Adrenal gland (tissue), 19 donors: ENCODE measurements at regions of chr4 and their contacts with region 1.

Region 1: GRCh38 chr4:16026160-16026761 is 57.6 kb downstream of the PROM1 start:
- DNase-seq: peak in 4 of 7 donors; percentile 17 to 45 (median 36)
- H3K4me3 ChIP-seq: no peak overlapping the region
- H3K27ac ChIP-seq: no peak overlapping the region
- H3K4me1 ChIP-seq: peaks cover 0 to 6% of the 10 kb centered on the region in 2 donors
- H3K27me3 ChIP-seq: no peaks in the 10 kb centered on the region
- CTCF ChIP-seq: peak; percentile 72 to 91 (median 84)
- POLR2A ChIP-seq: no peak

Region 2: DNA sequence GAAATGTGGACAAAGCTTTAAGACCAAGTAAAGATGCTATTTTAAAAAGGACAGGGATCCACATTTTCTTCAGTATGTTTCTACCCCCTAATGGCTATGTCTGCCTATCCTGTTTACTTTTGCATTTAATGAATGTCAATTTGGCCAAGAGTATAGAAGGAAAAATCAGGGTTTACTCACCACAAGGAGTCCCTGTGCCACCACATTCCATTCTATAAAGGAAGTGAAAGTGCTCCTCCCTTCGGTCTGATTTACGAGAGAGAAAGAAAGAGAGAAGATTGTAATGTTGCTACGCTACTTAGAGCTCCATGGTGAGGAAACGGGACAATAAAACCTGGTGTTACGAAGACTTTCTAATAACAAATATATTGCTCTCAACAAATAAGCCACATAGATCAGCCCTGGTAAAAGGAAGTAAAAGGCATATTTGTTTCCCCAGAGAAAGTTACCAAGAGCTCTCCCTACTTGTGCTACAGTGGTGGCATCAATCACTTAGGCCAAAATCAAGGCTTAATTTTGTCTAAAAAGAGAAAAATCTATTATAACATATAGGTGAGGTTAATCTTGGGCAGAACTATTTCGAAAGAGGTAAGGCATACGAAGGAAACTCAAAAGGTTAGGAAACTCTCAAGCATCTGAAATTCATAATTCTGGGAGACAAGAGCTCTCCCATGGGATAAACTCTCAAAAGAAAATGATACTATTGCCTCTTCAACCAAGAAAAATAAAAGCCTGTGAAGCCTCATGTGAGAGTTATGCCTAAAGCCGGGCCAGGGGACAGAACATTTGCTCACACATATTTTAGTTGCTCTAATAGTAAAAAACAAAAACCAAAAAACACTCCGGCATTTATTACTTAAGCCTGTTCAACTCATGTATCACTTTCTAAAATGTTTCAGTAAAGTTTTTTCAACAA is 170.5 kb after region 1 on chr4:
- intact Hi-C with region 1: loop called (anchors 10 kb)
- DNase-seq: peak in 2 of 7 donors; percentile 38 to 39
- H3K4me3 ChIP-seq: peak overlapping the region in 1 of 4 donors; percentile 32
- H3K27ac ChIP-seq: peak overlapping the region in 4 of 5 donors; percentile 2 to 73 (median 58)
- H3K4me1 ChIP-seq: peaks cover 41 to 79% of the 10 kb centered on the region in 2 donors
- H3K27me3 ChIP-seq: no peaks in the 10 kb centered on the region
- CTCF ChIP-seq: peak; percentile 25 to 74 (median 53)
- POLR2A ChIP-seq: no peak

Region 3: GRCh38 chr4:16205298-16206164 is 179.3 kb after region 1 on chr4:
- intact Hi-C with region 1: loop called in 1 of 2 experiments (anchors 10 kb)
- DNase-seq: no peak
- H3K4me3 ChIP-seq: no peak overlapping the region
- H3K27ac ChIP-seq: no peak overlapping the region
- H3K4me1 ChIP-seq: peaks cover 12 to 49% of the 10 kb centered on the region in 2 donors
- H3K27me3 ChIP-seq: no peaks in the 10 kb centered on the region
- CTCF ChIP-seq: peak; percentile 41 to 66 (median 53)
- POLR2A ChIP-seq: no peak

Region 4: GRCh38 chr4:16253127-16253960 is 227.1 kb after region 1 on chr4:
- intact Hi-C with region 1: loop called in 1 of 2 experiments (anchors 5 kb)
- DNase-seq: peak in 4 of 7 donors; percentile 29 to 46 (median 35)
- H3K4me3 ChIP-seq: no peak overlapping the region
- H3K27ac ChIP-seq: peak overlapping the region; percentile 12 to 50 (median 29)
- H3K4me1 ChIP-seq: peaks cover 22 to 24% of the 10 kb centered on the region in 2 donors
- H3K27me3 ChIP-seq: no peaks in the 10 kb centered on the region
- CTCF ChIP-seq: no peak
- POLR2A ChIP-seq: no peak

Region 5: DNA sequence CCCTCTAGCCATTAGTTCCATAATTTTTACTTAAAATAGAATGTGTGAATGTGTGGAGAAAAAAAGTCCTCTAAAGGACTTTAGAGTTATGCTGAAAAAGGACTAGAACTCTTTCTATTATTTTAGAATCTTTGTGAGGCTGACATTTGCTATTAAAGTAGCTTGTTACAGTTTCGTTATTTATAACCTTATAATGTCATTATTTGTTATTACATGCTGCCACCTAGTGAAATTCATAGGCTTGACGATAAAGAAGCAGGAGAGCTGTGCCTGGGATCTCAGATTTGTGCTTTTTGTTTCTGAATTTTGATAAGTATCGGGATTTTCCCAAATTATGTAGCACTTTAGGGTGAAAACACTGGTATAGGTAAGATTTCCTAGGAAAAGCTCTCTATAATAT is 238.5 kb after region 1 on chr4:
- intact Hi-C with region 1: loop called (anchors 5 kb)
- DNase-seq: peak in 1 of 7 donors; percentile 12
- H3K4me3 ChIP-seq: no peak overlapping the region
- H3K27ac ChIP-seq: no peak overlapping the region
- H3K4me1 ChIP-seq: peaks cover 0 to 4% of the 10 kb centered on the region in 2 donors
- H3K27me3 ChIP-seq: no peaks in the 10 kb centered on the region
- CTCF ChIP-seq: peak; percentile 32 to 83 (median 72)
- POLR2A ChIP-seq: no peak

Region 6: GRCh38 chr4:16443504-16444088 is 417.3 kb after region 1 on chr4:
- intact Hi-C with region 1: loop called (anchors 5 to 10 kb)
- DNase-seq: peak in 1 of 7 donors; percentile 14
- H3K4me3 ChIP-seq: no peak overlapping the region
- H3K27ac ChIP-seq: no peak overlapping the region
- H3K4me1 ChIP-seq: no peaks in the 10 kb centered on the region
- H3K27me3 ChIP-seq: no peaks in the 10 kb centered on the region
- CTCF ChIP-seq: peak; percentile 43 to 75 (median 62)
- POLR2A ChIP-seq: no peak